ENCODE measurements at regions of chr5 and their contacts with region 1.

Region 1: GRCh38 chr5:21097661-21098060 is 1109.7 kb upstream of the CDH18 start:
- DNase-seq: no peak
- ATAC-seq: no peak
- H3K4me3 ChIP-seq: no peak overlapping the region
- H3K27ac ChIP-seq: no peak overlapping the region
- H3K4me1 ChIP-seq: no peaks in the 10 kb centered on the region
- H3K27me3 ChIP-seq: no peaks in the 10 kb centered on the region
- CTCF ChIP-seq: no peak
- EP300 ChIP-seq: no peak
- POLR2A ChIP-seq: no peak
- RAD21 ChIP-seq: no peak

Region 2: DNA sequence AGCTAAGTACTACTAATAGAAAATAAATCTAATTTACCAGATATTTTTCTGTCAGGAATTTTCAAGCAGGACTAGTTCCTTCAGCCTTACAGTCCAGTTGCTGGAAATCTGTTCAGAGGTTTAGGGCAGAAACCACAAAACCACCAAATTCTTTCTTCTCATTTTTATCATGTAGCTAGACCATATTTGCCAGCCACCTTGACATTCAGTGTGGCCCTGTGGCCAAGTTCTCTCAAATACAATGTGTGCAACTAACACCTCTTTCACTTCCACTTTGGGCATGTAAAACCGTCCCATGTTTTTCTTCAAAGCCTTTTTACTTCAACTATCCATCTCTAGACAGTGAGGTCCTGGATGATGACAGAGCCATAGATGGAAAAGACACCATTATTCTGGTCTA is 23.6 kb after region 1 on chr5:
- CTCF ChIA-PET with region 1: no interaction called
- POLR2A ChIA-PET with region 1: no interaction called
- in situ Hi-C with region 1: no loop called
- intact Hi-C with region 1: loop called (anchors 1 kb)
- DNase-seq: no peak
- ATAC-seq: no peak
- H3K4me3 ChIP-seq: no peak overlapping the region
- H3K27ac ChIP-seq: no peak overlapping the region
- H3K4me1 ChIP-seq: no peaks in the 10 kb centered on the region
- H3K27me3 ChIP-seq: no peaks in the 10 kb centered on the region
- CTCF ChIP-seq: no peak
- EP300 ChIP-seq: no peak
- POLR2A ChIP-seq: no peak
- RAD21 ChIP-seq: no peak

Measured in K562 (cell line).